ENCODE measurements at regions of chr2 and their contacts with region 1.

Region 1: DNA sequence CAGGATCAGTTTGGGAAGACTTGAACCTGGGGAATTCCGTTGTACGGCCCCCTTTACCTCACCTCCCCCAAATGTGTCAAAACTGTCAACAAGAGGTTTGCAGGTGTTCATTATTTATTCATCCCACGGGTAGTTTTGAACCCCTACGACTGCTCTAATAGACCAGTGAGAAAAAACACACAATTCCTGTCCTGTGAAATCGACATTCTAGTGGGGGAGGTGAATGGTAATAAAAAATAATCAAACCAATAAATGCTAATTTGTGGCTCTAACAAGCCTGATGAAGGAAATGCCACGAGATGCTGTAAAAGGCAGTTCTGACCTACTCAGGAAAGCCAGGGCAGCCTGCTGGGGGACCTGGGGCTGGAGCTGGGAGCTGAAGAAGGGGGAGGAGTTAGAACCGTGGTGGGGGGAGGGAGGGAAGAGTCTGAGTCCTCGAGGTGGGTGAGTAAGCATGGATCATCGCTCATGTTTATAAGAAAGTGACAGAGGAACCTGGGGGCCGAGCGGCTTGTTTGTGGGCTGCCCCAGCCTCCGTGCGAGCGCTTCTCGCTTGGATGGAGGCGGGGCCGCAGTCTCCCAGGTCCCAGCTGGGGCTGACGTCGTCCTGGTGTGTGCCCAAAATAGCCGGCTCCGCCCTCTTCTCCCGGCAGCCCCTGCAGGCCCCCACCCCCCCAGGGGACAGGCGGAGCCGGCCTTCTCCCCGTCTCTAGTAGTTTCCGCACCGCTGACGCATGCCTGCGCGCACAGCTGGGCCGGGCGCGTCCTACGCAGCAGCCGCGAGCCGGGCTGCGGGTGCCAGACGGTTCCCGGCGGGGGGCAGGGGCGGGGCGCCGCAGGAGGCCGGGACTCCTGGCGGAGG is at the start of gene DNAJB2:
- DNase-seq: peak; percentile 96 to 100 (median 98)
- ATAC-seq: peak; percentile 76
- H3K4me3 ChIP-seq: peak within 1 kb of the TSS; percentile 66
- H3K4me3 Mint-ChIP-seq: peak within 1 kb of the TSS; percentile 97
- H3K27ac ChIP-seq: peak within 1 kb of the TSS; percentile 95 to 97
- H3K27ac Mint-ChIP-seq: peak within 1 kb of the TSS; percentile 98
- H3K4me1 ChIP-seq: peaks cover 43% of the 10 kb centered on the region
- H3K4me1 Mint-ChIP-seq: peaks cover 43% of the 10 kb centered on the region
- H3K27me3 ChIP-seq: no peaks in the 10 kb centered on the region
- H3K27me3 Mint-ChIP-seq: no peaks in the 10 kb centered on the region
- CTCF ChIP-seq: no peak
- total RNA-seq, gene DNAJB2: 151 to 161 TPM

Region 2: DNA sequence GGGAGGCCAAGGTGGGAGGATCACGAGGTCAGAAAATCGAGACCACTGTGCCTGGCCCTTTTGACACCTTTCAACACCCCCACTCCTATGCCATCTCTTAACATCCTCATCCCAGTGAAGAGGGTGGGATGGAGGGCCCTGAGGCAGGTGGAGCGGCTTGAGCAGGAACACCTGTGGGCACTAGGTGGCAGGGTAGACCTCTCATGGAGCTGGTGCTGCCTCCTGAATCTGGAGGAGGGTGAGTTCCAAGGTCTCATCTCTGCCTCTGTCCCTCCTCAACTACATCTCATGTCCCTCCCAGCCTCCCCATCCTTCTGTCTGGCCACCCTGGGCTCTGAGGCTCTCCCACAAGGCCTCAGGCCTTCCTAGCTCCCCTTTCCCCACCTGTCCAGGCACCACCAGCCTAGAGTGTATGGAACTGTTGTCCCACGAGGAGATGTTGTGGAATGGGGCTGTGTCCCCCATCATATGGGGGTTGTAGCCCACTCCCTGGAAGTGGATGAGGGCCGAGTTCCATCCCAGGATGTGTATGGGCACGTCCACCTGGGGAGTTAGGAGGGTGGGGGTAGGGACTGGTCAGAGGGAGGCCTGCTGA is 268.6 kb before region 1 on chr2:
- CTCF ChIA-PET with region 1: no interaction called
- POLR2A ChIA-PET with region 1: no interaction called
- intact Hi-C with region 1: no loop called
- DNase-seq: peak in 2 of 14 experiments; percentile 16 to 40
- ATAC-seq: peak; percentile 71
- H3K4me3 ChIP-seq: no peak overlapping the region
- H3K4me3 Mint-ChIP-seq: no peak overlapping the region
- H3K27ac ChIP-seq: no peak overlapping the region
- H3K27ac Mint-ChIP-seq: no peak overlapping the region
- H3K4me1 ChIP-seq: no peaks in the 10 kb centered on the region
- H3K4me1 Mint-ChIP-seq: no peaks in the 10 kb centered on the region
- H3K27me3 ChIP-seq: peaks cover 21% of the 10 kb centered on the region in 2 experiments
- H3K27me3 Mint-ChIP-seq: peaks cover 53% of the 10 kb centered on the region
- CTCF ChIP-seq: peak; percentile 35

Region 3: GRCh38 chr2:219218732-219219701 is 59.9 kb before region 1 on chr2 and contains the start of gene ABCB6:
- CTCF ChIA-PET with region 1: no interaction called
- POLR2A ChIA-PET with region 1: interaction called, 14 read pairs
- intact Hi-C with region 1: no loop called
- DNase-seq: peak; percentile 67 to 93 (median 86)
- ATAC-seq: peak; percentile 92
- H3K4me3 ChIP-seq: peak within 1 kb of the TSS; percentile 70
- H3K4me3 Mint-ChIP-seq: peak within 1 kb of the TSS; percentile 85
- H3K27ac ChIP-seq: peak within 1 kb of the TSS in 1 of 2 donors; percentile 56
- H3K27ac Mint-ChIP-seq: peak within 1 kb of the TSS; percentile 78
- H3K4me1 ChIP-seq: peaks cover 26% of the 10 kb centered on the region
- H3K4me1 Mint-ChIP-seq: peaks cover 21% of the 10 kb centered on the region
- H3K27me3 ChIP-seq: no peaks in the 10 kb centered on the region
- H3K27me3 Mint-ChIP-seq: no peaks in the 10 kb centered on the region
- CTCF ChIP-seq: no peak
- total RNA-seq, gene ABCB6: 2.6 to 3.1 TPM

Region 4: DNA sequence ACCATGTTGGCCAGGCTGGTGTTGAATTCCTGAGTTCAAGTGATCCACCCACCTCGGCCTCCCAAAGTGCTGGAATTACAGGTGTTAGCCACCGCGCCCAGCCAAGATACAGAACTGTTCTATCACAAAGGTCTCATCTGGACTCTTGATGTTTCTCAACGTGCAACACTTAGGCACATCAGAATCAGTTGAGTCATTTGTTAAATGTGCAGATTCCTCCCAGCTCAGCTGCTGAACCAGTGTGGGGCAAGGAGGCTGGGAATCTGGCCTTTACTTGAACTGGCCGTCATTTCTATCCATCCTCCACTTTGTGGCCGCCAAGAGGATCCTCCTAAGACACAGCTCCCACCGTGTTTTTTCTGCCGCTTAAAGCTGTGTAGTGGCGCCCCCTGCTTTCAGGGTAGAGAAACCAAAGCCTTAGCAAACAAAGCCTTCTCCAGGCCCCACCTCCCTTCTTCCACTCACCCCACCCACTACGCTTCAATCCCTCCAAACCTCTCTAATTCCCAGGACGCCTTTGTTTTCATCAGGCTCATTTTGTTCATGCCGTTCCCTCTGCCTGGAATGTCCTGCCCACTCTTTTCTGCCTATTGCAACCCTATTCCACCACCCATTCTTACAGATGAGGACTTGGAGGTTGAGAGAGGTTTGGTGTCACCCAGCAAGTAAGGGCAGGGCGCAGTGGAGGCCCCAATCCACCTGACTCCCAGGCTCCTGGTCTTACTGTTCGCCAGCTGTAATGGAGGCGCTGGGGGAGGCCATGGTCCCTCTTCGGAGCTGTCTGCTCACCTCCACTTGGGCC is 155.0 kb after region 1 on chr2:
- CTCF ChIA-PET with region 1: no interaction called
- POLR2A ChIA-PET with region 1: no interaction called
- intact Hi-C with region 1: no loop called
- DNase-seq: peak in 4 of 14 experiments; percentile 21 to 46 (median 39)
- ATAC-seq: peak; percentile 52
- H3K4me3 ChIP-seq: no peak overlapping the region
- H3K4me3 Mint-ChIP-seq: no peak overlapping the region
- H3K27ac ChIP-seq: no peak overlapping the region
- H3K27ac Mint-ChIP-seq: no peak overlapping the region
- H3K4me1 ChIP-seq: peaks cover 10% of the 10 kb centered on the region
- H3K4me1 Mint-ChIP-seq: no peaks in the 10 kb centered on the region
- H3K27me3 ChIP-seq: peaks cover 22 to 27% of the 10 kb centered on the region in 2 experiments
- H3K27me3 Mint-ChIP-seq: peaks cover 32% of the 10 kb centered on the region
- CTCF ChIP-seq: no peak

Measured in CD4-positive, alpha-beta T cell (primary cell).